BJ (cell line): ENCODE measurements at regions of chr13 and their contacts with region 1.

Region 1: DNA sequence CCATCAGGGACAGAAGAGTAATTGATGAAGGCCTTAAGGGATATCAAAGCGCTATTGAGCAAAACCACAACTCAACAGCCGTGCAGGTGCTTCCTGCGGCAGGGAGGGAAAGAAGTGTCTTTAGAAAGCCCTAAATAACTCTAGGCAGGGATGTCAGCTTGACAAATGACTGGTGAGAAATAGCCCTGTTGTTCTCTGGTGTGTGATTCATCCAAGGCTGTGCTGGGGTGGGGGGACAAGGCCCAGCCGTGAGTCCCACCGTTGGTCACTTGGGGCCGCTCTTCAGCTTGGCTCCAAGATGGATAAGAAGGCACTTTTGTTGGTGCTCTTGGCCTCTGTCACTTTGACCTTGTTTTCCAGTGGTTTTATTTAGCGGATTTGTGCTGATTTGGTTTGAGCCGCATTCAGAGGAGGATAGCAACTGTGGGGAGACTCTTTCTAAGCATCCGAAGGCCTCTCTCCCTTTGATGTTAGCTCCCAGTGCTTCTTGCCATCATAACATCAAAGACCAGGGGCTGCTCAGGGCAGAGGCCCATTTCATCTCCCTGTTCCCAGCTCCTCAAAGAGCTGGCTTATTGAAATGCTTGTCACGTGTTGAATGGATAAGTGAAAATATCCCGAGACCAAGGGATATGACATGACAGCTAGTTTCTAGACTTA is 130.3 kb upstream of the SERP2 start:
- DNase-seq: no peak
- H3K4me3 ChIP-seq: no peak overlapping the region
- H3K27me3 ChIP-seq: no peaks in the 10 kb centered on the region
- CTCF ChIP-seq: no peak

Region 2: DNA sequence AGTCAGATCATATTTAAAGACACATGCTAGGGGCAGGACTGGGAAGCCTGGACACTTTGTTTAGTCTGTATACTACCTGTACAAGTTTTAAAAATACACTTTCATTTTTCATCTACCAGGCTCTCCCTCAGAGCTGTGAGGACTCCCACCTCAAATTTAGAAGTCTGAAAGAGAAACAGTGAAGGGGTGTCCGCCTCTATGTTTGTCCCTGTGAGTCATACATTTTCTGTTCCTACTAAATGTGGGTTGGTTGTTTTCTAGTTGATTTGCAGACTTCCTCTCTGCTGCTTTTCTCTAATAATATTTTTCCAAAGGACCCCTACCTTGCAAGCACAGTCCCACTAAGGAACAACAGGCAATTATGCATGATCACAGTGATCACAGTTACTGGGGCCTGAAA is 567.0 kb before region 1 on chr13:
- CTCF ChIA-PET with region 1: no interaction called
- POLR2A ChIA-PET with region 1: no interaction called
- DNase-seq: no peak
- H3K4me3 ChIP-seq: no peak overlapping the region
- H3K27me3 ChIP-seq: no peaks in the 10 kb centered on the region
- CTCF ChIP-seq: no peak

Region 3: DNA sequence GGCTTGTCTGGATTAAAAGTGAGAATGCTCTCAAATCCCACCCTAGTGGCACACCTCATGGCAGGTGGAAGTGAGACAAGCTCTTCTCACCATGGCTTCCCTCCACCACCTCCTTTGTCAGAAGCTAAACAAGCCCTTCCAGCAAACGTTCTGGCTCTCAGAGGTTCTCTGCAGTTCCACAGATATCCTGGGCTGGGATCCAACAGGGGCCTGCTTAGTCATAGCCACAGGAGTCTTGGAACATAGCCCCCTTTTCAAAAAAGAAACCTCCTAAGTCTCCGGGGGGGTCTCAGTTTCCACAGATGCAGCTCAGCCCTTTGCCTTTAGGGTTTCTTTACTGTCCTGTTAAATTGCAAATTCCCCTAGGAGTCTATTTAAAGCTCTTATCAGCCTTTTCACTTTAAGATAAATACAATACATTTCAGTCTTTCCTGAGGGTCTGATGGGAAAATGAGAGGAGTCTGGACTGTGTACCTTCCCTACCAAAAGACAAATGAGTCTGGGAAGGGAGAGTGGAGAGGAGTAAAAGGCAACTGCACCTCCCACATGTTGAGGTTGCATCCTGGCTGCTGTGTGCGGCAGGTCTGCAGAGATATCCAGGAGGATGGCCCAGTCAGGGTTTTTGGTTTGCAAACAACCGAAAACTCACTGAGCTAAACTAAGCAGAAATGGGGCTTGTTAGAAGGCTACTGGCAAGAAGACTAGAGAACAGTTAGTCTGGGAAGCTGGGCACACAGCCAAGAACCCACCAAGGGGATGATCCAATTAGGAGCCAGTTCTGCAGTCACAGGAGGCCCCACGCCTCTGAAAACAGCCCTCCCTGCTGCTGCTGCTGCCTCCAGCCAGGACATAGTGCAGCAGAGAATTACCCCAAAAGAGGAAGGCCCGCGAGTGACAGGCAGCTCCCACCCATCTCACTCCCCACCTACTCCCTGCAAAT is 88.9 kb after region 1 on chr13:
- CTCF ChIA-PET with region 1: no interaction called
- POLR2A ChIA-PET with region 1: interaction called, 27 read pairs
- DNase-seq: peak; percentile 39
- H3K4me3 ChIP-seq: no peak overlapping the region
- H3K27me3 ChIP-seq: no peaks in the 10 kb centered on the region; the same call in 1 of the 2 replicates
- CTCF ChIP-seq: no peak